Activated CD4-positive, alpha-beta T cell treated with anti-CD3 and anti-CD28 coated beads, Interleukin-2, amount 10 ng/mL, durations not matched to agents 24 days and 14 days (primary cell): ENCODE measurements at regions of chr20 and their contacts with region 1.

Region 1: GRCh38 chr20:47501483-47502270 is at the start of gene NCOA3:
- DNase-seq: peak; percentile 97
- H3K4me3 Mint-ChIP-seq: peak within 1 kb of the TSS; percentile 99
- H3K27ac Mint-ChIP-seq: peak within 1 kb of the TSS; percentile 99
- H3K4me1 Mint-ChIP-seq: peaks cover 45% of the 10 kb centered on the region
- H3K27me3 Mint-ChIP-seq: peaks cover 2% of the 10 kb centered on the region
- total RNA-seq, gene NCOA3: 140 TPM in 2 replicates

Region 2: DNA sequence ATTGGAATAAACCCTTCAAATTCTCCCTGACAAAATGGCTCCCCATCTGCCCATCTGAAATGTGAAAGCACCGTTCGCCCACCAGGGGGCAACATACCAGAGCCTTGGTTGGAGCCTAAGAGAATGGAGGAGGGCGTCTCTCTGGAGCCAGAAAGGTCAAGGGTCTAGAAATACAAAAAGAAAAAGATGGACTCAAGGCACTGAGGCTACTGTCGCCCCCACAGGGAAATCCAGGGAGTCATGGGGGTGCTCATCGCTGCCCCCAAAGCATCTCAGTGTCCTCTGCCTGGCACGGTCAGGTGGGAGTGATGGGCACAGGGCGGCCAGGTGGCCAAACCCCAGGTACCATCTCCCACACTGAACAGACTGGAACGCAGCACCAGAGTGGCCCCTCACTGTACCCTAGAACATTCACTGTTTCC is 281.5 kb before region 1 on chr20:
- intact Hi-C with region 1: no loop called
- DNase-seq: peak; percentile 80
- H3K4me3 Mint-ChIP-seq: no peak overlapping the region
- H3K27ac Mint-ChIP-seq: no peak overlapping the region
- H3K4me1 Mint-ChIP-seq: peaks cover 7% of the 10 kb centered on the region
- H3K27me3 Mint-ChIP-seq: no peaks in the 10 kb centered on the region

Region 3: DNA sequence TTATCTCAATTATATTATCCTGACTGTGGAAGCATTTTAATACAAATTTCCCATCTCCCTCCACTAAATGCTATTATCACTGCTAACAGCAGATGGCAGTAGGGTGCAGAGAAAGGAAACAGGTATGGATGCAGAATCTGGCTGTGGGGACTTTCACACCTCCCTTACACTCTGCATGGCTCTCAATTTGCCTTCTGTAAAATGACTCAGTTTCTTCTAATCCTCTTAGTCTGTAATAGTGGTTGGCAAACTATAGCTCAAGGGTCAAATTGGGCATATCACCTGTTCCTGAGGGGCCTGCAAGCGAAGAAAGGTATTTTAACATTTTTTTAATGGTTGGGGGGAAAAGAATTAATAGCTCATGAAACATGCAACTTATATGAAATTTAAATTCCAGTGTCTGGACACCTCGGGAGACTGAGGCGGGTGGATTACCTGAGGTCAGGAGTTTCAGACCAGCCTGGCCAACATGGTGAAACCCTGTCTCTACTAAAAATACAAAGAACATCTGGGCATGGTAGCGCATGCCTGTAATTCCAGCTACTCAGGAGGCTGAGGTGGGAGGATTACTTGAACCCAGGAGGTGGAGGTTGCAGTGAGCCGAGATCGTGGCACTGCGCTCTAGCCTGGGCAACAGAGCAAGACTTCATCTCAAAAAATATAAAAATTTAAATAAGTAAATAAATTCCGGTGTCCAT is 228.6 kb before region 1 on chr20:
- intact Hi-C with region 1: loop called (anchors 5 kb)
- DNase-seq: peak; percentile 90
- H3K4me3 Mint-ChIP-seq: peak overlapping the region; percentile 74
- H3K27ac Mint-ChIP-seq: peak overlapping the region; percentile 96
- H3K4me1 Mint-ChIP-seq: peaks cover 37% of the 10 kb centered on the region
- H3K27me3 Mint-ChIP-seq: no peaks in the 10 kb centered on the region

Region 4: GRCh38 chr20:47453142-47453782 is 48.4 kb before region 1 on chr20:
- intact Hi-C with region 1: loop called (anchors 1 kb)
- DNase-seq: peak; percentile 87
- H3K4me3 Mint-ChIP-seq: peak overlapping the region; percentile 20
- H3K27ac Mint-ChIP-seq: peak overlapping the region; percentile 73
- H3K4me1 Mint-ChIP-seq: peaks cover 41% of the 10 kb centered on the region
- H3K27me3 Mint-ChIP-seq: no peaks in the 10 kb centered on the region

Region 5: DNA sequence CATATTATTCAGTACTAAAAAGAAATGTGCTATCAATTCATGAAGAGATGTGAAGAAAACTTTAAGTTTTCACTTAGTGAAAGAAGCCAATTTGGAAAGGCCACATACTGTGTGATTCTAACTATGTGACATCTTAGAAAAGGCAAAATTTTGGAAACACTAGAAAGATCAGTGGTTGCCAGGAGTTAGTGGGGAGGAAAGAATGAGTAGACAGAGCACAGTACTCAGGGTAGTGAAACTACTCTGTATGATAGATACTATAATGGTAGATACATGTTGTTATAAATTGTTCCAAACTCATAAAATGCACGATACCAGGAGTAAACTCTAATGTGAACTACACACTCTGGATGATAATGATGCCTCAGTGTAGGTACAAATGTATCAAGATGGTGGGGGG is 14.2 kb after region 1 on chr20:
- intact Hi-C with region 1: loop called (anchors 1 kb)
- DNase-seq: no peak
- H3K4me3 Mint-ChIP-seq: peak overlapping the region; percentile 5
- H3K27ac Mint-ChIP-seq: peak overlapping the region; percentile 91
- H3K4me1 Mint-ChIP-seq: peaks cover 32% of the 10 kb centered on the region
- H3K27me3 Mint-ChIP-seq: no peaks in the 10 kb centered on the region

Region 6: GRCh38 chr20:47620808-47621805 is 119.4 kb after region 1 on chr20:
- intact Hi-C with region 1: loop called (anchors 1 kb)
- DNase-seq: peak; percentile 72
- H3K4me3 Mint-ChIP-seq: no peak overlapping the region
- H3K27ac Mint-ChIP-seq: no peak overlapping the region
- H3K4me1 Mint-ChIP-seq: peaks cover 27% of the 10 kb centered on the region
- H3K27me3 Mint-ChIP-seq: no peaks in the 10 kb centered on the region